Activated CD4-positive, alpha-beta memory T cell treated with anti-CD3 and anti-CD28 coated beads, Interleukin-2, amount 10 ng/mL, durations not matched to agents 7 days and 5 days (primary cell): ENCODE measurements at regions of chr11 and their contacts with region 1.

Region 1: DNA sequence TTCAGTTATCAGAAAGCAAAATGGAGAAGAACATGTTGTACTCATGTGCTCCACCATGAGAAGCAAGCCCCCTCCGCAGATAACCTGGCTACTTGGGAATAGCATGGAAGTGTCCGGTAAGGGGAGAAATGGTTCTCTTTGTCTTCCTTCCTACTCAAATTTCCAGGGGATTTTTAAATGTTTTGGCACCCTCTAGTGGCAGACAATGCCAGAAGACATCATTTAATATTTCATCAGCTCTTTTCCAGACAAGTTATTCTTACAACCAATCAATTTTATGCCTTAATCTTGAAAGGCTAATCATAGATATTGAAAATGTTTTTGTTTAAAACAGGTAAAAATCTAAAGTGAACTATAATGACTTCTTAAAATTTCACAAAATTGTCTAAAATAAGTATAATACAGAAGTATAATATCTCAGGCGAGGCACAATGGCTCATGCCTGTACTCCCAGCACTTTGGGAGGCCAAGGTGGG is 15.7 kb downstream of the CRTAM start:
- DNase-seq: peak; percentile 31
- H3K4me3 Mint-ChIP-seq: no peak overlapping the region
- H3K27ac Mint-ChIP-seq: no peak overlapping the region
- H3K4me1 Mint-ChIP-seq: peaks cover 31% of the 10 kb centered on the region
- H3K27me3 Mint-ChIP-seq: peaks cover 31% of the 10 kb centered on the region

Region 2: DNA sequence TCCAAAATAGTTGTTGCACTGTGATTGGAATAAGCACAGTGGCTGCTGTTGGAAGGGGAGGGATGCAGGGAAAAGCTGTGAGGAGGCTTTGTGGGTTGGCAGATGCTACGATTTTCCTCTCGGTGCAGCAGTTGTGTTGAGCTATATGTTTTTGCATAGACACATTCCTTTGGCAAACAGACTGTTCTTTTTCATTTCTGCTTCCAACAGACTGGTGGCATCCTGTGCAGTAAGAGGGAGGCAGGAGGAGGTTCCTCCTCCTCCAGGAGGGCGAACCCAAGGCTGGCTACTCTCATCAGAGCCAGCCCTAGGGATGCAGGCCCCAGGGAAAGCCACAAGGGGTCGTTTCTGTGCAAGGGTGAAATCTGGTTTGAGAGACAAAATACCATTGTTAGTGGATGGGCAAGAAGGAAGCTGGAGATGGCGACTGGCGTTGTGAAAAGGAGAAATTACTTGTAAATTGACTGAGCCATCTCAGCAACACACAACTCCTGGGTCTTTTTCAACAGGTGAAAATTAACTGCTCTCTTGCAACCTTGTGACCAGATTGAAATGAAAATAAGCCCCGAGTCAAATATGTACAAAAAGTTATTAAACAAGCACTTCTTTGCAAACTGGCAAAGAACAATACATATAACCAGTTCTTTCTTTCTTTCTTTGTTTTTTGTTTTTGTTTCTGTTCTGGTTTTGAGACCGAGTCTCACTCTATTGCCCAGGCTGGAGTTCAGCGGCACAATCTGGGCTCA is 225.0 kb before region 1 on chr11:
- CTCF ChIA-PET with region 1: interaction called, 34 read pairs
- POLR2A ChIA-PET with region 1: no interaction called
- DNase-seq: peak; percentile 67
- H3K4me3 Mint-ChIP-seq: no peak overlapping the region
- H3K27ac Mint-ChIP-seq: no peak overlapping the region
- H3K4me1 Mint-ChIP-seq: peaks cover 5% of the 10 kb centered on the region
- H3K27me3 Mint-ChIP-seq: peaks cover 9% of the 10 kb centered on the region

Region 3: DNA sequence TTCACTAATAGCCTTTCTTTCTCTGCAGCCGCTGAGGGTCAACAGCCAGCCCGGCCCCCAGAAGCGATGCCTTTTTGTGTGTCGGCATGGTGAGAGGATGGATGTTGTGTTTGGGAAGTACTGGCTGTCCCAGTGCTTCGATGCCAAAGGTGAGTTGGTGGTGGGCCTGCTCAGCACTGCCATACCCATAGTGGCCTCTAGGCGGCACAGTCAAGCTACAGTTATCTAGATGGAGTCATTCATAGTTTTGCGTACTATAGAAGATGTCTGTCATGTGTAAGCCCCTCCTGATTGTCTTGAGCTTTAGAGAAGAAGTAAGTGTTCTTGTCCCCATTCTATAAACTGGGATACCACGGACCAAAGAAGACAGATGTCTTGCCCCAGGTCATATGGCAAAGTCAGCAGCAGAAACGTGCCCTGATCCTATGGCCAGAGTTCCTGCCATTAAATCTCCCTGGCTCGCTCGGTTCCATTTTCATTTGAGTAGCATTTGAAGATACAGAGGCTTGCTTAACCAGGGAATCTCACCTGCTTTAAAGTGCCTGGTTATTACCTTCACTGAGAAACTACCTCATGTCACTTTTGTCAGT is 57.8 kb before region 1 on chr11:
- CTCF ChIA-PET with region 1: interaction called, 109 read pairs
- POLR2A ChIA-PET with region 1: interaction called, 3 read pairs
- DNase-seq: peak; percentile 58
- H3K4me3 Mint-ChIP-seq: no peak overlapping the region
- H3K27ac Mint-ChIP-seq: no peak overlapping the region
- H3K4me1 Mint-ChIP-seq: no peaks in the 10 kb centered on the region
- H3K27me3 Mint-ChIP-seq: no peaks in the 10 kb centered on the region

Region 4: GRCh38 chr11:122814401-122814800 is 39.6 kb before region 1 on chr11:
- CTCF ChIA-PET with region 1: interaction called, 21 read pairs
- POLR2A ChIA-PET with region 1: no interaction called
- DNase-seq: no peak
- H3K4me3 Mint-ChIP-seq: no peak overlapping the region
- H3K27ac Mint-ChIP-seq: no peak overlapping the region
- H3K4me1 Mint-ChIP-seq: no peaks in the 10 kb centered on the region
- H3K27me3 Mint-ChIP-seq: peaks cover 1% of the 10 kb centered on the region

Region 5: GRCh38 chr11:123020968-123021367 is 167.0 kb after region 1 on chr11:
- CTCF ChIA-PET with region 1: interaction called, 10 read pairs
- POLR2A ChIA-PET with region 1: no interaction called
- DNase-seq: peak; percentile 38
- H3K4me3 Mint-ChIP-seq: no peak overlapping the region
- H3K27ac Mint-ChIP-seq: no peak overlapping the region
- H3K4me1 Mint-ChIP-seq: peaks cover 6% of the 10 kb centered on the region
- H3K27me3 Mint-ChIP-seq: peaks cover 18% of the 10 kb centered on the region

Region 6: DNA sequence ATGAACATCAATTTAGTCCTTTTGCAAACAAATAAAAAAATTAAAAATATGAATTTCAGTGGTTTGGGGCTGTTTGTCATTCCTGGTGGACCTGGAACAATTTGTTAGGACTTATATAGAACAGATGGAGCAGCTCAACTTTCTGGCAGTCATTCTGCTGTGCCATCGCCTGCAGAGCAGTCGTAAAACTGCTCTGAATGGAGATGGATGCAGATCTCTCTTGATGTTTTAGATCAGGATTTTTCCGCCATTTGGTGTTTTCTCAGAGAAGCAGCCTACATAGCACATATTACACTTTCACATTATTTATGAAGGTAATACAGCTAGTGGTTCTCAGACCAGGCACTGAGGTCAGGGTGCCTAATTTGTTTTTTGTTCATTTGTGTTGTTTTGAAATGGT is 239.7 kb after region 1 on chr11:
- CTCF ChIA-PET with region 1: no interaction called
- POLR2A ChIA-PET with region 1: no interaction called
- DNase-seq: no peak
- H3K4me3 Mint-ChIP-seq: no peak overlapping the region
- H3K27ac Mint-ChIP-seq: no peak overlapping the region
- H3K4me1 Mint-ChIP-seq: peaks cover 5% of the 10 kb centered on the region
- H3K27me3 Mint-ChIP-seq: no peaks in the 10 kb centered on the region